T-cell (primary cell): ENCODE measurements at regions of chr17 and their contacts with region 1.

Region 1: GRCh38 chr17:13594762-13595598 is 6.7 kb downstream of the HS3ST3A1 start:
- DNase-seq: peak; percentile 40 to 89 (median 77)
- ATAC-seq: peak; percentile 72 to 81 (median 78)
- H3K4me3 ChIP-seq: no peak overlapping the region
- H3K4me3 Mint-ChIP-seq: no peak overlapping the region
- H3K27ac ChIP-seq: no peak overlapping the region
- H3K27ac Mint-ChIP-seq: peak overlapping the region in 1 of 2 donors; percentile 29
- H3K4me1 ChIP-seq: no peaks in the 10 kb centered on the region
- H3K4me1 Mint-ChIP-seq: peaks cover 5 to 7% (median 6%) of the 10 kb centered on the region in 3 donors
- H3K27me3 ChIP-seq: peaks cover 5 to 10% of the 10 kb centered on the region in 2 experiments
- H3K27me3 Mint-ChIP-seq: peaks cover 31 to 32% of the 10 kb centered on the region in 2 donors

Region 2: DNA sequence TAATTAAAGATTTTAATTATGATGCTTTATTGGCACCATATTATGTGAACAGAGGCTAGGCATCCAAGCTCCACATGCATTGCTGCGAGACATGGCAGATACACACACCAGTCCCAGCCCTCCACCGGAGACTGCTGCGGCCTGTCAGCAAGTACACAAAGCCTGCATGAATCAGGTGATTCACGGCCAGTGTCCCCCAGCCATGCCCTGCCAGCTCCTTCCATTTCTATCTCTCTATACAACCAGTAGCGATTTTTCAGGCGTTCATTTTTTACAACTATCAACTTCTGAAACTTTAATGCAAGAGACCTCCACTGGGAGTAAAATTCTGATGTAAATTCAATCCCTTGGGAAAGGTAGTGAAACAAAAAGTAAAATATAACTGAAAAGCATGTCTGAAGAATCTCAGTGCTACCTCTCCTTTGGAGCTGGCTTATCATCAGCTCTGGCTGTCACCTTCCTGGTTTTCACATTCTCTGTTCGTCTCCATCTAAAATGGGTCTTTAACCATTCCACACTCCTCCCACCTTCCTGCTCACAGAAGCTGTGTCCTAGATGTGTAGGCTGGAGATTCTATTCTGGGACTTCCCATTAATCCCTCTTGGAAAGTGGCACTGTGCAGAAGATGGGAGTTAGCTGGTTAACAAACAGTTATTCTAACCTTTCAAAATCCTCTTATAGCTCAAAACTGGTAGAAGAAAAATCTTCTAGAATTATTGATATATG is 25.4 kb before region 1 on chr17:
- CTCF ChIA-PET with region 1: no interaction called
- POLR2A ChIA-PET with region 1: no interaction called
- DNase-seq: no peak
- ATAC-seq: no peak
- H3K4me3 ChIP-seq: no peak overlapping the region
- H3K4me3 Mint-ChIP-seq: no peak overlapping the region
- H3K27ac ChIP-seq: no peak overlapping the region
- H3K27ac Mint-ChIP-seq: no peak overlapping the region
- H3K4me1 ChIP-seq: no peaks in the 10 kb centered on the region
- H3K4me1 Mint-ChIP-seq: peaks cover 0 to 8% (median 7%) of the 10 kb centered on the region in 3 donors
- H3K27me3 ChIP-seq: peaks cover 0 to 5% of the 10 kb centered on the region in 2 experiments
- H3K27me3 Mint-ChIP-seq: peaks cover 23 to 30% of the 10 kb centered on the region in 2 donors

Region 3: DNA sequence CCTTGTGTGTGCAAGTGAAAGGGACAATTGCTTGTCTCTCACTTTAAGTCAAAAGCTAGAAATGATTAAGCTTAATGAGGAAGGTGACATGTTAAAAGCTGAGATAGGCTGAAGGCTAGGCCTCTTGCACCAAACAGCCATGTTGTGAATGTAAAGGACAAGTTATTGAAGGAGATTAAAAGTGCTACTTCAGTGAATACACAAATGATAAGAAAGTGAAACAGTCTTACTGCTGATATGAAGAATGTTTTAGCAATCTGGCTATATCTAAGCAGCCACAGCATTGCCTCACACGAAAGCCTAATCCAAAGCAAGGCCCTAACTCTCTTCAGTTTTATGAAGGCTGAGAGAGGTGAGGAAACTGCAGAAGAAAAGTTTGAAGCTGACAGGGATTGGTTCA is 570.6 kb after region 1 on chr17:
- CTCF ChIA-PET with region 1: interaction called in 1 of 2 experiments, 12 read pairs
- POLR2A ChIA-PET with region 1: no interaction called
- DNase-seq: no peak
- ATAC-seq: no peak
- H3K4me3 ChIP-seq: no peak overlapping the region
- H3K4me3 Mint-ChIP-seq: no peak overlapping the region
- H3K27ac ChIP-seq: no peak overlapping the region
- H3K27ac Mint-ChIP-seq: no peak overlapping the region
- H3K4me1 ChIP-seq: no peaks in the 10 kb centered on the region
- H3K4me1 Mint-ChIP-seq: peaks cover 5 to 10% (median 7%) of the 10 kb centered on the region in 3 donors
- H3K27me3 ChIP-seq: no peaks in the 10 kb centered on the region
- H3K27me3 Mint-ChIP-seq: no peaks in the 10 kb centered on the region

Region 4: GRCh38 chr17:14784997-14785696 is 1190.2 kb after region 1 on chr17:
- CTCF ChIA-PET with region 1: interaction called in 1 of 2 experiments, 15 read pairs
- POLR2A ChIA-PET with region 1: no interaction called
- DNase-seq: peak in 30 of 35 experiments; percentile 3 to 58 (median 28)
- ATAC-seq: peak; percentile 55 to 66 (median 62)
- H3K4me3 ChIP-seq: no peak overlapping the region
- H3K4me3 Mint-ChIP-seq: no peak overlapping the region
- H3K27ac ChIP-seq: no peak overlapping the region
- H3K27ac Mint-ChIP-seq: no peak overlapping the region
- H3K4me1 ChIP-seq: no peaks in the 10 kb centered on the region
- H3K4me1 Mint-ChIP-seq: no peaks in the 10 kb centered on the region
- H3K27me3 ChIP-seq: peaks cover 0 to 11% of the 10 kb centered on the region in 2 experiments
- H3K27me3 Mint-ChIP-seq: peaks cover 3 to 9% of the 10 kb centered on the region in 2 donors

Region 5: DNA sequence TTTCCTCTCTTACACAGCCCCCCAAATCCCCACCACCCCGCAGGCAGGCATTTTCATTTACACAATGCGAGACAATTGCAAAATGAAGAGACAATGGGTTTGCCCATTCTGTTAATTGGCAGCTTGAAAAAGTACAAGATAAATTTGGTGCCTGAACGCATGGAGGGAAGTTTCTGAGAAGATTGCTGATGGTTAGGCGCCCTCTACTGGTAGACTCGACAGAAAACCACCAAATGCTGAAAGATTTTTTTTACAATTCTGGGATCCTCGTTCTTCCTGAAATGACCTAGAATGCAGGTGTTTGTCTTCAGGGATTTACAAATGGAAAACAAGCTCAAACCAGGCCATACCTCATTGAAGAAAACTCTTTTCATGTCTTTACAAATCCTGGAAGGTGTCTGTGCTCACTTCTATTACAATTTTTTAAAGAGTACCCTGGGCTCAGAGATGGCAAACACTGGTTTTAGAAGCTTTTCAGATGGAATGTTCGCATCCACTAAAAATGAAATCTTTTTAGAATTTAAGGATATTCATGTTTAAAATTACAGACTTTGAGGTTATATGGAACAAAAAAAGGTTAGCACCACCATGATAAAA is 1331.6 kb after region 1 on chr17:
- CTCF ChIA-PET with region 1: interaction called, 8 to 11 read pairs
- POLR2A ChIA-PET with region 1: no interaction called
- DNase-seq: peak in 31 of 35 experiments; percentile 5 to 80 (median 38)
- ATAC-seq: peak in 1 of 4 experiments; percentile 32
- H3K4me3 ChIP-seq: no peak overlapping the region
- H3K4me3 Mint-ChIP-seq: no peak overlapping the region
- H3K27ac ChIP-seq: no peak overlapping the region
- H3K27ac Mint-ChIP-seq: no peak overlapping the region
- H3K4me1 ChIP-seq: no peaks in the 10 kb centered on the region
- H3K4me1 Mint-ChIP-seq: no peaks in the 10 kb centered on the region
- H3K27me3 ChIP-seq: peaks cover 0 to 4% of the 10 kb centered on the region in 2 experiments
- H3K27me3 Mint-ChIP-seq: peaks cover 7 to 22% of the 10 kb centered on the region in 2 donors